GM12878 (cell line): ENCODE measurements at regions of chr18 and their contacts with region 1.

Region 1: GRCh38 chr18:35580701-35581539 is 620 bp upstream of the GALNT1 start:
- DNase-seq: no peak
- ATAC-seq: peak; percentile 58
- H3K4me3 ChIP-seq: peak overlapping the region; percentile 85
- H3K27ac ChIP-seq: peak overlapping the region; percentile 69
- H3K4me1 ChIP-seq: peaks cover 20% of the 10 kb centered on the region
- H3K27me3 ChIP-seq: no peaks in the 10 kb centered on the region
- CTCF ChIP-seq: no peak
- EP300 ChIP-seq: no peak
- POLR2A ChIP-seq: peak; percentile 75
- RAD21 ChIP-seq: no peak

Region 2: DNA sequence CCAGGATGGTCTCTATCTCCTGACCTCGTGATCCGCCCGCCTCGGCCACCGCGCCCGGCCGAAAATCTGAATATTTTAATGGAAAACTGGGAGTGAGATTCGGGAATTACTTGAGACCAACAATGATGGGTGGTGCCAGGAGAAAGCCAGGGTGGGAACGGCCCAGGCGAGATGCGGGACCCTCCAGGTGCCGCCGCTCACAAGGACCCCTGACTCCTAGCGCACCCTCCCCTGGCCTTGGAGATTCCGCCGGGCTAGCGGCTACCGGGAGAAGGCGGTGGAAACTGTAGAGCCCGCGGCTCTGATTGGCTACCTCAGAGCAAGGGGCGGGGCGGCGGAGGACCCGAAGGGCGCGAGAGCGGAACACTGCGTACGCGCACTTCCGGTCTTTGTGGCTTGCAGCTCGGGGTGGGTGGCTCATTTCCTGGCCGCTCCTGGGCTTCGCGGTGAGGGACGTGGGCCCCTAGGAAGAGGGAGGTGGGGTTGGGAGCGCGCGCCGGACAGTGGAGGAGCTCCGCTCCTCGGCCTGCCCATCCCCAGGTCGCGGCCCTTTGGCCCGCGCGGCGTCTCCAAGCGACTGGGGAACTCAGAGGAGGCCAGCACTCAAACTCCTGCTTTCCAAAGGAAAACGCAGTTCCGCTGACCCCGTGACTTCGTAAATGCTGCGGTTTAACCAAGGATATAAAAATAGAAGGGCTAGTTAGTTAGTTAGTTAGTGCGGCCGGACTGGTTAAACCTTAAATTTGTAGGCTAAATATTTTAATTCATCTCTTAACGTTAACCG is 340.1 kb before region 1 on chr18 and contains the start of gene ZNF397:
- CTCF ChIA-PET with region 1: no interaction called
- POLR2A ChIA-PET with region 1: interaction called, 4 read pairs
- RAD21 ChIA-PET with region 1: no interaction called
- SMC1A ChIA-PET with region 1: no interaction called
- in situ Hi-C with region 1: no loop called
- intact Hi-C with region 1: loop called (anchors 10 kb)
- DNase-seq: peak; percentile 73
- ATAC-seq: peak; percentile 99
- H3K4me3 ChIP-seq: peak within 1 kb of the TSS; percentile 90
- H3K27ac ChIP-seq: peak within 1 kb of the TSS; percentile 88
- H3K4me1 ChIP-seq: no peaks in the 10 kb centered on the region
- H3K27me3 ChIP-seq: no peaks in the 10 kb centered on the region
- CTCF ChIP-seq: no peak
- EP300 ChIP-seq: peak in 1 of 2 experiments; percentile 61; a peak in 1 of 4 replicates
- POLR2A ChIP-seq: peak; percentile 97
- RAD21 ChIP-seq: no peak
- polyA plus RNA-seq, gene ZNF397: 5.2 to 5.3 TPM

Region 3: GRCh38 chr18:35497370-35498197 is 83.3 kb before region 1 on chr18 and contains the start of gene INO80C:
- CTCF ChIA-PET with region 1: interaction called, 3 read pairs
- POLR2A ChIA-PET with region 1: interaction called, 5 read pairs
- RAD21 ChIA-PET with region 1: interaction called, 3 read pairs
- SMC1A ChIA-PET with region 1: interaction called, 4 read pairs
- in situ Hi-C with region 1: loop called (anchors 5 kb)
- intact Hi-C with region 1: loop called (anchors 2 kb)
- DNase-seq: peak; percentile 85
- ATAC-seq: peak; percentile 92
- H3K4me3 ChIP-seq: peak within 1 kb of the TSS; percentile 80
- H3K27ac ChIP-seq: peak within 1 kb of the TSS; percentile 98
- H3K4me1 ChIP-seq: no peaks in the 10 kb centered on the region; the same call in 1 of the 2 replicates
- H3K27me3 ChIP-seq: no peaks in the 10 kb centered on the region
- CTCF ChIP-seq: no peak
- EP300 ChIP-seq: peak; percentile 4 to 62; a peak in 2 of 4 replicates
- POLR2A ChIP-seq: peak; percentile 98
- RAD21 ChIP-seq: peak; percentile 31; the same call in 1 of the 2 replicates
- polyA plus RNA-seq, gene INO80C: 25.0 to 31.6 TPM

Region 4: GRCh38 chr18:35564795-35565453 is 16.0 kb before region 1 on chr18:
- CTCF ChIA-PET with region 1: no interaction called
- POLR2A ChIA-PET with region 1: no interaction called
- RAD21 ChIA-PET with region 1: interaction called, 5 read pairs
- SMC1A ChIA-PET with region 1: interaction called, 10 read pairs
- in situ Hi-C with region 1: no loop called
- intact Hi-C with region 1: no loop called
- DNase-seq: no peak
- ATAC-seq: peak; percentile 91
- H3K4me3 ChIP-seq: no peak overlapping the region
- H3K27ac ChIP-seq: peak overlapping the region; percentile 2; the same call in 1 of the 2 replicates
- H3K4me1 ChIP-seq: peaks cover 5% of the 10 kb centered on the region; the same call in 1 of the 2 replicates
- H3K27me3 ChIP-seq: no peaks in the 10 kb centered on the region
- CTCF ChIP-seq: no peak
- EP300 ChIP-seq: peak; percentile 11 to 57; a peak in 2 of 4 replicates
- POLR2A ChIP-seq: no peak
- RAD21 ChIP-seq: no peak

Region 5: DNA sequence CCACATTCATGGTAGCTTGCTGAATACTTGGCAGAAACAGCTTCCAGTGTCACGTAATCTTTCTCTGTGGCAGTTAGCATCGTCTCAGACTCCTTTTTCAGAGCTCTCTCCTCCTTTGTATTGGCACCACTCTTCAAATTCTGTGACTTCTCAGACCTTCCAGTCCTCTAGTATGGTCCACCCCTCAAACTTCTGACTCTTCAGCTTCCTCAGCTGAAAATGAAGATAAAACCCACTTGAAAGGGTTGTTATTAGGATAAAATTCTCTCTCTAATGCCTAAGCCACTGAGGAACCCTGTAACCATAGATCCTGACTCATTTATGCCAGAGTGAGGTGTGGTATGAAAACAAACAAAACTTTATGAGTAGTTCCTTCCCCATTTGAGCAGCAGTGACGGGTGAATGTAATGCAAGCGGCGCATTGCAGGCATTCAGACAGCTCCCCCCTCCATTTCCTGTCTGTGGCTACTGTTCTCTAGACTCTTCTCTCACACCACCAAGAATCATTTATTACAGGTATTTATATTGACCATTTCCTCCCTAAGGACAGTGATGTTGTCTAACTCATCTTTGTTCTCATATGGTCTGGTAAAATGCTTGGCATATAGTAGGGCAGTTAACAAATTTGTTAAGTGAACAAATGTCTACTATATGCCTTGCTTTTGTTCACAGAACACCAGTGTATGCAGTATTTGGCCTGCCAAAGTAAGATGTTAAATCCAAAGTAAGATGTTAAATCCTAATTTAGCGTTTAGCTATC is 35.9 kb after region 1 on chr18:
- CTCF ChIA-PET with region 1: interaction called, 4 read pairs
- POLR2A ChIA-PET with region 1: interaction called, 4 read pairs
- RAD21 ChIA-PET with region 1: interaction called, 3 read pairs
- SMC1A ChIA-PET with region 1: interaction called, 12 read pairs
- in situ Hi-C with region 1: no loop called
- intact Hi-C with region 1: loop called (anchors 2 kb)
- DNase-seq: peak; percentile 88
- ATAC-seq: peak; percentile 97
- H3K4me3 ChIP-seq: peak overlapping the region; percentile 38; the same call in 1 of the 2 replicates
- H3K27ac ChIP-seq: peak overlapping the region; percentile 54
- H3K4me1 ChIP-seq: peaks cover 15% of the 10 kb centered on the region
- H3K27me3 ChIP-seq: no peaks in the 10 kb centered on the region
- CTCF ChIP-seq: no peak
- EP300 ChIP-seq: peak; percentile 80 to 92; a peak in 3 of 4 replicates
- POLR2A ChIP-seq: no peak
- RAD21 ChIP-seq: peak; percentile 25; the same call in 1 of the 2 replicates

Region 6: DNA sequence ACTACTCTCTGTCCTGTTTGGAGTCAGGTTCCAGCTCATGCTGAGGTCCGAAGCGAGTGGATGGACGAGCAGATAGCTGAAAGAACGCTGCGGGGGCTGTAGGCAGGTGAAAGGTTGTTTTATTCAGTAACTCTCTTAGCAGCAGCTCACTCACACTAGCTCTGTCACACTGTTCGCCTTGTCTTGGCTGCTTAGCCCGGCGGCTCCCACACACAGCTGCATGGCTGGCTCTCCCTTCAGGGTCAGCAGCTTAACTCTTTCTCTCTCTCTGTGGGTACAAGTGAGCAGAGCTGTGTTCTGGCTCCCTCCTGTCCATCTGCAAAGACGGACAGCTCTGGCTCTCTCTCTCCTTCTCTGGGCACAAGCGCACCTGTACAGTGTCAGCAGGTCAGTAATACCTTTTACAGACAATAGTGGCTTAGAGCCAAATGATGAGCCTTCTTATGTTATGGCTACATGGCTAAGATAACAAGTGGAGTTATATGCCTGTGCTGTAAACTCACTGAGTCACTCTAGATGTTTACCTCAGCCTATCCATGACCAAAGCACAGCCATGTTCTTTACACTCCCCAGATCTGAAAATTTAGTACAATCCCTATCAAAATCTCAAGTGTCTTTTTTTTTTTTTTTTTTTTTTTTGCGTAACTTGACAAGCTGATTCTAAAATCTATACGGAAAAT is 149.9 kb after region 1 on chr18:
- CTCF ChIA-PET with region 1: no interaction called
- POLR2A ChIA-PET with region 1: no interaction called
- RAD21 ChIA-PET with region 1: no interaction called
- SMC1A ChIA-PET with region 1: no interaction called
- in situ Hi-C with region 1: no loop called
- intact Hi-C with region 1: no loop called
- DNase-seq: no peak
- ATAC-seq: no peak
- H3K4me3 ChIP-seq: no peak overlapping the region
- H3K27ac ChIP-seq: no peak overlapping the region
- H3K4me1 ChIP-seq: no peaks in the 10 kb centered on the region
- H3K27me3 ChIP-seq: no peaks in the 10 kb centered on the region; a peak in 1 of 4 replicates
- CTCF ChIP-seq: no peak
- EP300 ChIP-seq: no peak
- POLR2A ChIP-seq: no peak
- RAD21 ChIP-seq: no peak

Region 7: DNA sequence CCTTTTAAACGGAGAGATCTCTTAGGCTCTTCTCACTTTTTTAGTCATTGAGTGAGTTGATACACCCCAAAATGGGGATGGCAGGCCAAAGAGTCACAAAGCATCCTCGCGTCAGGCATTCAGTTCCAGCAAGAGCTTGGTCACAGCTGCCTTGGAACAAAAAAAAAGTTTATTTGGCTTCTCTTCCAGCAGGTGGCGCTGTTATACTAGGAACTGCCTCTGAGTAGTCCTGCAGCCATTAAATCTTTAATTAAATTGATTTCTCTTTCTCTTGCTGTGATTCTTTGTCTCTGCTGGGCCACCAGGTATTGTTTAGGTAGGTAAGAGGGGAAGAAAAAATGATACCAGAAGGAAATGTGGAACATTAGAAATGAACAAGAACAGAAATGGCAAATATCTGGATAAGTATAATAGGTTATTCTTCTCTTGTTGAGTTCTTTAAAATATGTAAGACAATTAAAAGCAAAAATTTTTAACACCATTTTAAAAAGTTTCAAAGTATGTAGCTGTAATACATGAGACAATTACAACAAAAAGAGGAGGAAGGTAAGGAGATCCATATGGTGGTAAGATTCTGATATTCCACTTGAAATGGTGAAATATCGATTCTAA is 175.7 kb after region 1 on chr18:
- CTCF ChIA-PET with region 1: no interaction called
- POLR2A ChIA-PET with region 1: no interaction called
- RAD21 ChIA-PET with region 1: interaction called, 5 read pairs
- SMC1A ChIA-PET with region 1: no interaction called
- in situ Hi-C with region 1: no loop called
- intact Hi-C with region 1: loop called (anchors 10 kb)
- DNase-seq: no peak
- ATAC-seq: peak; percentile 93
- H3K4me3 ChIP-seq: no peak overlapping the region
- H3K27ac ChIP-seq: no peak overlapping the region
- H3K4me1 ChIP-seq: no peaks in the 10 kb centered on the region
- H3K27me3 ChIP-seq: peaks cover 0 to 2% of the 10 kb centered on the region in 2 experiments; a peak in 2 of 4 replicates
- CTCF ChIP-seq: peak; percentile 51 to 84 (median 53); a peak in 5 of 6 replicates
- EP300 ChIP-seq: no peak
- POLR2A ChIP-seq: no peak
- RAD21 ChIP-seq: peak; percentile 92

Region 8: GRCh38 chr18:36067055-36067957 is 486.4 kb after region 1 on chr18 and contains the start of gene RPRD1A:
- CTCF ChIA-PET with region 1: no interaction called
- POLR2A ChIA-PET with region 1: no interaction called
- RAD21 ChIA-PET with region 1: no interaction called
- SMC1A ChIA-PET with region 1: no interaction called
- in situ Hi-C with region 1: no loop called
- intact Hi-C with region 1: loop called (anchors 10 kb)
- DNase-seq: peak; percentile 81
- ATAC-seq: peak; percentile 94
- H3K4me3 ChIP-seq: peak within 1 kb of the TSS; percentile 89
- H3K27ac ChIP-seq: peak within 1 kb of the TSS; percentile 72
- H3K4me1 ChIP-seq: no peaks in the 10 kb centered on the region
- H3K27me3 ChIP-seq: no peaks in the 10 kb centered on the region
- CTCF ChIP-seq: no peak
- EP300 ChIP-seq: peak; percentile 11 to 63; a peak in 2 of 4 replicates
- POLR2A ChIP-seq: peak; percentile 91
- RAD21 ChIP-seq: no peak
- polyA plus RNA-seq, gene RPRD1A: 16.2 to 19.1 TPM

Region 9: DNA sequence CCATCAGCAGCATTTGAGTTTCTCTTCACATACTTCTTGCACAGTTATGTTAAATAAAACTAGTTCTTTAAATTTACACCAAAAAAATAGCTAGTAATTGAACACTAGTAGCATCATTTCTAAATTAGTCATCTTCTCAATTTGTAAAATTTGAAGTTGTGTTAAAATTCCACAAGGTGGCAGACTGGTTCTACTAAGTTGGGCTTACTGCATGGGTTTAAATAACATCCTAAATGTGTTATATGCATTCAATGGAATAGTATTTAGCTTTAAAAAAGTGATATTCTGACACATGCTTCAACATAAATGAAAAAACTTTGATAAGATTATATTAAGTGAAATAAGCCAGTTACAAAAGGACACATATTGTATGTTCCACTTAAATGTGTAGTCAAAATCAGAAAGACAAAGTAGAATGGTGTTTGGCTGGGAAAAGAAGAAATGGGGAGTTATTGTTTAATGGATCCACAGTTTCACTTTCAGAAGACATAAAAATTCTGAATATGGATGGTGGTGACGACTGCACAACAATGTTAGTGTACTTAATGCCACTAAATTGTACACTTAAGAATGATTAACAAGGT is 515.1 kb after region 1 on chr18:
- CTCF ChIA-PET with region 1: no interaction called
- POLR2A ChIA-PET with region 1: no interaction called
- RAD21 ChIA-PET with region 1: no interaction called
- SMC1A ChIA-PET with region 1: no interaction called
- in situ Hi-C with region 1: no loop called
- intact Hi-C with region 1: no loop called
- DNase-seq: no peak
- ATAC-seq: peak; percentile 76
- H3K4me3 ChIP-seq: no peak overlapping the region
- H3K27ac ChIP-seq: no peak overlapping the region
- H3K4me1 ChIP-seq: no peaks in the 10 kb centered on the region
- H3K27me3 ChIP-seq: no peaks in the 10 kb centered on the region
- CTCF ChIP-seq: peak; percentile 33 to 67 (median 36); a peak in 4 of 6 replicates
- EP300 ChIP-seq: no peak
- POLR2A ChIP-seq: no peak
- RAD21 ChIP-seq: peak; percentile 83